ENCODE measurements at regions of chr2 and their contacts with region 1.

Region 1: DNA sequence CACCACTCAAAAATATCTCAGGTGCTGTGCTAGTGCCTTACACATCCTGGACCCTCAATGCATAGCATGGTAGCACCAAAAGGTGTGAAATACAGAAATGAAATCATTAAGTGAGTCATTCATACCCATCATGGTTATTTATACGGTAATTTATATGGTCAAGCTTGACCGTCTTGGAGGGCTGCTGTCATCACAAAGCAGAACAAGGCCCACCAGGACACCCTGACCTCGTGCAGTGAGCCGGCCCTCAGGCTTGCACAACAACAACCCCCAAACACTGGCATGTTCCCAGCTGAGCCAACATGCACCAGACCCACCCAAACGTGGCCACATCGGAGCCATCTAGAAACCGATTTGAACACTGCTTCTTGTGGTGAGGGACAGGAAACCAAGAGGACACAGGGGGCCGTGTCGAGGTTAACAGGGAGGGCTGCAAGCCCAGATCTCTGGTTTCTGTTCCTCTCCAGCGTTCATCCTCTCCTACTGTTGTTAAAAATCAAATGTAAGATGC is 378.5 kb upstream of the ID2 start:
- DNase-seq: no peak
- ATAC-seq: no peak
- H3K4me3 ChIP-seq: no peak overlapping the region
- H3K27ac ChIP-seq: no peak overlapping the region
- H3K4me1 ChIP-seq: peaks cover 15% of the 10 kb centered on the region
- H3K27me3 ChIP-seq: no peaks in the 10 kb centered on the region
- CTCF ChIP-seq: no peak
- POLR2A ChIP-seq: no peak
- RAD21 ChIP-seq: no peak

Region 2: GRCh38 chr2:8119782-8120505 is 183.4 kb before region 1 on chr2:
- CTCF ChIA-PET with region 1: no interaction called
- POLR2A ChIA-PET with region 1: no interaction called
- dilution Hi-C with region 1: no loop called
- in situ Hi-C with region 1: no loop called
- intact Hi-C with region 1: loop called (anchors 2 kb)
- DNase-seq: peak; percentile 73
- ATAC-seq: peak; percentile 45
- H3K4me3 ChIP-seq: no peak overlapping the region
- H3K27ac ChIP-seq: no peak overlapping the region
- H3K4me1 ChIP-seq: peaks cover 12% of the 10 kb centered on the region
- H3K27me3 ChIP-seq: peaks cover 5% of the 10 kb centered on the region
- CTCF ChIP-seq: no peak
- POLR2A ChIP-seq: no peak
- RAD21 ChIP-seq: no peak

Region 3: DNA sequence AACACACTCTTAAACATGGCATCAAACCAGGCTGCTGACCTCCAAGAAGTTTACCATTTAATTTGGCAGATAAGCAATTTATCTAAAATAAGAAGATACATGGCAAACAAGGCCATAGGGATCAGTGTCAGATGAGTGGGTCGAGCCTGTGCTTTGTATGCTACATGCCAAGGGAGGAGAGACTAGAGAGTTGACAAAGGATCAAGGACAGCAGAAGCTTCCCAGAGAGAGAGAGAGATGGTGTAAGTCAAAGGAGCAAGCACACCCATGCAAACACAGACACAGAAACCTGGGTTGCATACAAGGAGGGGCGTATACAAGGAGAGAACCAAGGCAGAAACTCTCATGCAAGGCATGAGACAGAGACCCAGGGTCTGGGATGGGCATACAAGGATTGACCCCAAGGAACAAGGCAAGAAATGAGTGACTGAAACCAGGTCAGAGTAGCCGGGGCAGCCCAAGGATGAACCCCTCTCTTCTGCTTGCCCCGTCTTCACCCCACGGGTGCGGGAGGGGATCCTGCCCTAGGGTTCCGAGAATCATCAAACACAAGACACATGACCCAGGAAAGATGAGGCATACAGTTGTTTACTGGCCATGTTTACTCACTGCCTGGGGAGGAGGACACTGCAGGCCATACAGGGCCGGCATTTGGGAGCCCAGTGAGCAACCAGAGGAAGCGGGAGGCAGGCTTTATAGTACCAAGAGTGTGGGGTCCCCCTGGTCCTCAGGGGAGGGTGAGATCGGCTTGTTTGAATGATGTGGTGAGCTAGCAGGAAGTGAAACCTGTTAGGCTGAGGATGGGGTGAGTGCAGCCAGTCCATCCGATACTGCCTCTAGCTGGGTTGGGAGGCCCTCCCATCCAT is 150.8 kb before region 1 on chr2:
- CTCF ChIA-PET with region 1: no interaction called
- POLR2A ChIA-PET with region 1: no interaction called
- dilution Hi-C with region 1: no loop called
- in situ Hi-C with region 1: no loop called
- intact Hi-C with region 1: loop called (anchors 10 kb)
- DNase-seq: no peak
- ATAC-seq: no peak
- H3K4me3 ChIP-seq: no peak overlapping the region
- H3K27ac ChIP-seq: no peak overlapping the region
- H3K4me1 ChIP-seq: peaks cover 13% of the 10 kb centered on the region
- H3K27me3 ChIP-seq: no peaks in the 10 kb centered on the region
- CTCF ChIP-seq: no peak
- POLR2A ChIP-seq: no peak
- RAD21 ChIP-seq: no peak

Region 4: DNA sequence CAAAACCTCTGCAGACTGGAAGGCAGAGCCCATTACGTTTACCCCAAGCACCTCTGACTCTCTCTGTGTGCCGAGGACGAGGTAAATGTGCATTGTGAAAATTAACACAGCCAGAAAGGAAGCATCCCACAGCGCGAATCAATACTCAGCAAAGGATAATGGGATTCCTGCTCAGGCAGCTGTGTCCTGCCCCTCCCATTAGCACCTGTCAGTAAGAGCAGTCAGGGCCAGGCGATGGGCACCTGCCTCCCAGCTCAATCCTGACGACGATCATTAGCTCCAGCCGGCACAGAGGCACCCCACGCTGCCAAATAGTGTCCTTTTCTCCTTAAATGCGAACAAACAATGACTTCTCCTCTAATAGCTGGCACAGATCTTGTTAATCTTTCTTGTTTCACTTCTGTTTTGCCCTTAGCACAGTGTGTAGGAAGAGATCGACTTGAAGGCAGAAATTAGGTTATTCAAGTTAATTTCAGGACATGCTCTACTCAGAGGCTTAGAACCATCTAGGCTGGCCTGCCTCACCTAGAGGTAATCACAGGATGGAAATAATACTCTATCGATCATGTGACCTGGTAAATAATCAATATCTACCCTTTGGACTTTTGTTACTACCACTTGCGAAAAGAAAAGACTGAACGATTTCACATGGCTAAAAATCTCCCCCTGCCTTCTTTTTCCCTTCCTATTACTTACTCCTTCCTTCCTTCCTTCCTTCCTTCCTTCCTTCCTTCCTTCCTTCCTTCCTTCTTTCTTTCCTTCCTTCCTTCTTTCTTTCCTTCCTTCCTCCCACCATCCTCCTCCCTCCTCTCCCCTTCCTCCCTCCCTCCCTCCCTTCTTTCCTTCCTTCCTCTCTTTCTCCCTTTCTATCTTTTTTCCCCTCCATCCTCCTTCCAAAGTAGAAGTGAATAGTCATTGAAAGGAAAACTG is 109.4 kb before region 1 on chr2:
- CTCF ChIA-PET with region 1: no interaction called
- POLR2A ChIA-PET with region 1: no interaction called
- dilution Hi-C with region 1: no loop called
- in situ Hi-C with region 1: no loop called
- intact Hi-C with region 1: loop called (anchors 5 kb)
- DNase-seq: no peak
- ATAC-seq: peak; percentile 7; the same call in 1 of the 2 replicates
- H3K4me3 ChIP-seq: no peak overlapping the region
- H3K27ac ChIP-seq: peak overlapping the region; percentile 25; the same call in 1 of the 2 replicates
- H3K4me1 ChIP-seq: peaks cover 17% of the 10 kb centered on the region
- H3K27me3 ChIP-seq: no peaks in the 10 kb centered on the region
- CTCF ChIP-seq: no peak
- POLR2A ChIP-seq: no peak
- RAD21 ChIP-seq: no peak

Measured in IMR-90 (cell line).